ENCODE measurements at regions of chr14 and their contacts with region 1.

Region 1: GRCh38 chr14:67526676-67527459 is 6.2 kb upstream of the PLEKHH1 start:
- DNase-seq: peak; percentile 13
- ATAC-seq: peak; percentile 96
- H3K4me3 ChIP-seq: no peak overlapping the region
- H3K27ac ChIP-seq: no peak overlapping the region
- H3K4me1 ChIP-seq: no peaks in the 10 kb centered on the region
- H3K27me3 ChIP-seq: peaks cover 0 to 9% of the 10 kb centered on the region in 2 experiments; a peak in 1 of 4 replicates
- CTCF ChIP-seq: peak; percentile 53 to 82 (median 62)
- EP300 ChIP-seq: no peak
- POLR2A ChIP-seq: no peak
- RAD21 ChIP-seq: peak; percentile 68

Region 2: GRCh38 chr14:66662374-66662773 is 864.5 kb before region 1 on chr14:
- CTCF ChIA-PET with region 1: no interaction called
- POLR2A ChIA-PET with region 1: no interaction called
- RAD21 ChIA-PET with region 1: no interaction called
- SMC1A ChIA-PET with region 1: no interaction called
- in situ Hi-C with region 1: no loop called
- intact Hi-C with region 1: no loop called
- DNase-seq: no peak
- ATAC-seq: peak; percentile 46; the same call in 1 of the 3 replicates
- H3K4me3 ChIP-seq: no peak overlapping the region
- H3K27ac ChIP-seq: no peak overlapping the region
- H3K4me1 ChIP-seq: no peaks in the 10 kb centered on the region
- H3K27me3 ChIP-seq: no peaks in the 10 kb centered on the region
- CTCF ChIP-seq: peak in 2 of 3 experiments; percentile 7 to 25; a peak in 2 of 6 replicates
- EP300 ChIP-seq: no peak
- POLR2A ChIP-seq: no peak
- RAD21 ChIP-seq: peak; percentile 36; the same call in 1 of the 2 replicates

Region 3: DNA sequence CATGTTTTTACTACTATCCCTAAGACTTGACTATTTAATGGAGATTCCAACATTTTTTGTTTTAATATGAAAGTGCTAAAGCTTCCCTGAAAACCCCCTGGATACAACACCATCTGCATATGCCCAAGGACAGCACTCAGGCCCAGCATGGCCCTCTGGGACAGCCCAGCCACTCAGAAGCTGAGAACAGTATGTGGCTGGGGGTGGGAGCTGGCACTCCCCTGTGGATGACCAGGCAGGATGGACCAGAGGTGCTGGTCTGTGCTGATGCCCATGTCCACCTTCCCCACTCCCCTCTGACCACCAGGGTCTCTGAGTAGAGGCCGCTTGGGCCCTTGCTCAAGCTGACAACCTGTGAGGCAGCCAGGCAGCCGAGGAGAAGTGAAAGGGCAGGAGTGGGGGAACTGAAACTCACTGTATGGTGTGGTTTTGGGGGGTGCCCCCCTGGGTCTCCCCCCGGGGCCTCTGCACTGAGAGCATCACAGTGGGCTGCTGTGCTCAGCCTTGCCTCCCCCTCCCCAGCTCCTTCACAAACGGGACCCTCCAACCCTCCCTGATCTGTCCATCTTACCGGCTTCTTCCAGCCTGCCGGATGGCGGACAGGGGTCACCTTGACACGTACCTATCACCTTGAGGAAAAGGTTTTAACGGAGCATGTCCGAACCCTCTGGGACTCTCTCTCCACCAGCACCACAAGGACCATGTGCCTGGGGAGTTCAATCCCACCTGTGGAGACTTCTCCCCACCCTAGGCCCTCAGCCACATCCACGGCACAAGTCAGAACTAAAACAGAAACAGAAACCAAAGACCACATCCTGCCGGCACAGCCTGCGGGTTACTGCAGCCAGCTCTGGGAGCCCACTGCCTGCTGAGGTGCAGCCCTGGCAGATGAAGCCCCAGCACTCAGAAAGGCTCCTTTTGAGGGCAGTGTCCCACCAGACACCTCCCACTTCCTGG is 38.7 kb before region 1 on chr14 and contains the start of gene TMEM229B:
- CTCF ChIA-PET with region 1: interaction called, 11 read pairs
- POLR2A ChIA-PET with region 1: no interaction called
- RAD21 ChIA-PET with region 1: no interaction called
- SMC1A ChIA-PET with region 1: interaction called, 5 read pairs
- in situ Hi-C with region 1: no loop called
- intact Hi-C with region 1: no loop called
- DNase-seq: peak; percentile 94
- ATAC-seq: peak; percentile 95
- H3K4me3 ChIP-seq: peak within 1 kb of the TSS; percentile 50; the same call in 1 of the 2 replicates
- H3K27ac ChIP-seq: peak within 1 kb of the TSS; percentile 96
- H3K4me1 ChIP-seq: peaks cover 47% of the 10 kb centered on the region
- H3K27me3 ChIP-seq: no peaks in the 10 kb centered on the region
- CTCF ChIP-seq: no peak
- EP300 ChIP-seq: peak; percentile 81 to 88
- POLR2A ChIP-seq: no peak; the same call in 1 of the 2 replicates
- RAD21 ChIP-seq: peak; percentile 28; the same call in 1 of the 2 replicates
- polyA plus RNA-seq, gene TMEM229B: 0.24 to 0.32 TPM

Region 4: GRCh38 chr14:67514650-67515385 is 12.1 kb before region 1 on chr14:
- CTCF ChIA-PET with region 1: interaction called, 15 read pairs
- POLR2A ChIA-PET with region 1: interaction called, 3 read pairs
- RAD21 ChIA-PET with region 1: interaction called, 4 read pairs
- SMC1A ChIA-PET with region 1: interaction called, 6 read pairs
- in situ Hi-C with region 1: no loop called
- intact Hi-C with region 1: no loop called
- DNase-seq: no peak
- ATAC-seq: peak; percentile 68
- H3K4me3 ChIP-seq: peak overlapping the region; percentile 85
- H3K27ac ChIP-seq: no peak overlapping the region
- H3K4me1 ChIP-seq: peaks cover 20% of the 10 kb centered on the region
- H3K27me3 ChIP-seq: no peaks in the 10 kb centered on the region; a peak in 2 of 4 replicates
- CTCF ChIP-seq: no peak
- EP300 ChIP-seq: no peak
- POLR2A ChIP-seq: no peak
- RAD21 ChIP-seq: no peak

Region 5: GRCh38 chr14:67541448-67542387 is 14.8 kb after region 1 on chr14:
- CTCF ChIA-PET with region 1: interaction called, 14 read pairs
- POLR2A ChIA-PET with region 1: no interaction called
- RAD21 ChIA-PET with region 1: interaction called, 4 read pairs
- SMC1A ChIA-PET with region 1: interaction called, 11 read pairs
- in situ Hi-C with region 1: no loop called
- intact Hi-C with region 1: no loop called
- DNase-seq: no peak
- ATAC-seq: peak; percentile 79
- H3K4me3 ChIP-seq: peak overlapping the region; percentile 63; the same call in 1 of the 2 replicates
- H3K27ac ChIP-seq: no peak overlapping the region
- H3K4me1 ChIP-seq: peaks cover 7% of the 10 kb centered on the region; the same call in 1 of the 2 replicates
- H3K27me3 ChIP-seq: peaks cover 0 to 2% of the 10 kb centered on the region in 2 experiments; a peak in 3 of 4 replicates
- CTCF ChIP-seq: no peak
- EP300 ChIP-seq: no peak
- POLR2A ChIP-seq: peak; percentile 44; the same call in 1 of the 2 replicates
- RAD21 ChIP-seq: no peak

Region 6: GRCh38 chr14:67583711-67584644 is 57.1 kb after region 1 on chr14:
- CTCF ChIA-PET with region 1: interaction called, 10 read pairs
- POLR2A ChIA-PET with region 1: no interaction called
- RAD21 ChIA-PET with region 1: no interaction called
- SMC1A ChIA-PET with region 1: interaction called, 3 read pairs
- in situ Hi-C with region 1: no loop called
- intact Hi-C with region 1: no loop called
- DNase-seq: no peak
- ATAC-seq: peak; percentile 98
- H3K4me3 ChIP-seq: no peak overlapping the region
- H3K27ac ChIP-seq: no peak overlapping the region
- H3K4me1 ChIP-seq: no peaks in the 10 kb centered on the region
- H3K27me3 ChIP-seq: no peaks in the 10 kb centered on the region
- CTCF ChIP-seq: peak; percentile 77 to 83 (median 80)
- EP300 ChIP-seq: no peak
- POLR2A ChIP-seq: no peak
- RAD21 ChIP-seq: peak; percentile 96

Measured in GM12878 (cell line).